Aorta (tissue), 5 donors: ENCODE measurements at regions of chr7 and their contacts with region 1.

Region 1: DNA sequence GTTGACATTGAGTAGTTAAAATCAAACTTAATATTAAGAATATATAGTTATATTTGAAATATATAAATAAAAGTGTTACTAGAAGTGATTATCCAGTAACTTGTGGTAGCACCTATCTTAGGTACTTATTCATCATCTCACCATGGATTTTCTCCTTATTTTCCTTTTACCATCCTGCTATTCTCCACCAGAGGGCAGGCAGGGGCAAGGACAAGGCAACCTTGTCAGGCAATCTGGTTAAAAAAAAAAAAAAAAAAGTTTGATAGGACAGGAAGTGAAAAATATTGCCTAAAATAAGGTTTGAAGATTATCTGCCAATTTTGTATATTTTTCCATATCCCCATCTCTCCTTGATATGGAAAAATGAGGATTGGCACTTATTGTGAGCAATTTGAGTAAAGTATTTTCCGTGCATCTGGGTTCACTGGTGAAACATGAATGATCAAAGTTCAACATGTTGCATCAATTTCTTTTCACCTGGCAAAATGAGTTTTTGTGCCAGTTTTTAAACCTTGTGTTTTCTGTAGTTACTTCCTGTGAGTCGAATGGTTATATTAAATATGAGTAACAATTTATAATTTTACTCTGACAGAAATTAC is 256.7 kb downstream of the AGMO start:
- DNase-seq: peak in 1 of 2 donors; percentile 51
- ATAC-seq: no peak
- H3K4me3 ChIP-seq: no peak overlapping the region
- H3K27ac ChIP-seq: no peak overlapping the region
- H3K4me1 ChIP-seq: no peaks in the 10 kb centered on the region
- H3K27me3 ChIP-seq: no peaks in the 10 kb centered on the region

Region 2: GRCh38 chr7:15376600-15376999 is 71.5 kb after region 1 on chr7:
- intact Hi-C with region 1: no loop called
- DNase-seq: no peak
- ATAC-seq: no peak
- H3K4me3 ChIP-seq: no peak overlapping the region
- H3K27ac ChIP-seq: no peak overlapping the region
- H3K4me1 ChIP-seq: peaks cover 0 to 2% of the 10 kb centered on the region in 2 donors
- H3K27me3 ChIP-seq: no peaks in the 10 kb centered on the region

Region 3: GRCh38 chr7:15424468-15424867 is 119.4 kb after region 1 on chr7:
- intact Hi-C with region 1: no loop called
- DNase-seq: no peak
- ATAC-seq: no peak
- H3K4me3 ChIP-seq: no peak overlapping the region
- H3K27ac ChIP-seq: no peak overlapping the region
- H3K4me1 ChIP-seq: no peaks in the 10 kb centered on the region
- H3K27me3 ChIP-seq: no peaks in the 10 kb centered on the region

Region 4: DNA sequence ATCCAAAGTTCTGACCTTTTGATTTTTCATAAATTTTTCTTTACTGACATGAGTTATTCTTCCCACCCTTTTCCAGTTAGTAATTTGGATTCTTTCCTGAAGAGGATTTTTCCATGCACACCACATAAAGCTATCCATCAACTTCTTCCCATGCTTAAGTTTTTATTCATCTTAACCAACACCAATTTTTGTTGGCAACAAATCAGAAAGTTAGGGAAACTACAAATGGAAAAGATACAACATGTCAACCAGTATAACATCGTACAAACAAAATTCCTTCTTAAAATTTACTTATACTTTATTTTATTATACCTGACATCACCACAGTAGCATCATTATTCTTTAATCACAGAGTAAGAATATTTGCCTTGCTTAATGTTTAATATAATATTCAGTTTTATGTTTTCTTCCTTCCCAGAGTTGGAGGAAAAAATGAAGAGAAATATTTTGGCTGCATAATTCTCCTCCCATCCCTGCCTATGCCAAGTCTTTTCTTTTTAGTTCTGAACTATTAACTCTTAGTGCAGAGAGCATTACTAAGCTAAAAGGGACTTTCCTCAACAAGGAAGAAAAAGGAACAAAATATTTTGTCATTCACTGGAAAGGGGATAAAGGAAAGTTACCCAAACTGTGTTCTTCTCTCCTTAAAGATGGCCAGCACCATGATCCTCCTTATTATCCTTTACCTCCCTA is 448.9 kb after region 1 on chr7:
- intact Hi-C with region 1: no loop called
- DNase-seq: no peak
- ATAC-seq: no peak
- H3K4me3 ChIP-seq: no peak overlapping the region
- H3K27ac ChIP-seq: no peak overlapping the region
- H3K4me1 ChIP-seq: peaks cover 0 to 5% of the 10 kb centered on the region in 2 donors
- H3K27me3 ChIP-seq: no peaks in the 10 kb centered on the region

Region 5: GRCh38 chr7:16071246-16071857 is 766.3 kb after region 1 on chr7:
- intact Hi-C with region 1: loop called (anchors 2 to 5 kb)
- DNase-seq: no peak
- ATAC-seq: peak; percentile 73
- H3K4me3 ChIP-seq: no peak overlapping the region
- H3K27ac ChIP-seq: no peak overlapping the region
- H3K4me1 ChIP-seq: no peaks in the 10 kb centered on the region
- H3K27me3 ChIP-seq: no peaks in the 10 kb centered on the region